A673 (cell line): ENCODE measurements at regions of chr13 and their contacts with region 1.

Region 1: GRCh38 chr13:43815204-43815603 is 28.4 kb upstream of the ENOX1 start:
- DNase-seq: peak; percentile 27
- H3K4me3 ChIP-seq: no peak overlapping the region
- H3K27ac ChIP-seq: no peak overlapping the region
- H3K4me1 ChIP-seq: peaks cover 4% of the 10 kb centered on the region
- H3K27me3 ChIP-seq: no peaks in the 10 kb centered on the region
- CTCF ChIP-seq: no peak

Region 2: GRCh38 chr13:43036351-43037250 is 778.6 kb before region 1 on chr13:
- CTCF ChIA-PET with region 1: no interaction called
- POLR2A ChIA-PET with region 1: interaction called, 11 read pairs
- intact Hi-C with region 1: no loop called
- DNase-seq: no peak
- H3K4me3 ChIP-seq: no peak overlapping the region
- H3K27ac ChIP-seq: no peak overlapping the region
- H3K4me1 ChIP-seq: no peaks in the 10 kb centered on the region
- H3K27me3 ChIP-seq: no peaks in the 10 kb centered on the region
- CTCF ChIP-seq: no peak